H1 (cell line): ENCODE measurements at regions of chr21 and their contacts with region 1.

Region 1: GRCh38 chr21:43676391-43676790 is 17.0 kb downstream of the RRP1B start:
- DNase-seq: no peak
- H3K4me3 ChIP-seq: no peak overlapping the region
- H3K27ac ChIP-seq: no peak overlapping the region
- H3K4me1 ChIP-seq: peaks cover 0 to 4% (median 0%) of the 10 kb centered on the region in 4 experiments; a peak in 2 of 7 replicates
- H3K27me3 ChIP-seq: no peaks in the 10 kb centered on the region
- CTCF ChIP-seq: no peak
- EP300 ChIP-seq: no peak
- POLR2A ChIP-seq: no peak
- RAD21 ChIP-seq: no peak

Region 2: DNA sequence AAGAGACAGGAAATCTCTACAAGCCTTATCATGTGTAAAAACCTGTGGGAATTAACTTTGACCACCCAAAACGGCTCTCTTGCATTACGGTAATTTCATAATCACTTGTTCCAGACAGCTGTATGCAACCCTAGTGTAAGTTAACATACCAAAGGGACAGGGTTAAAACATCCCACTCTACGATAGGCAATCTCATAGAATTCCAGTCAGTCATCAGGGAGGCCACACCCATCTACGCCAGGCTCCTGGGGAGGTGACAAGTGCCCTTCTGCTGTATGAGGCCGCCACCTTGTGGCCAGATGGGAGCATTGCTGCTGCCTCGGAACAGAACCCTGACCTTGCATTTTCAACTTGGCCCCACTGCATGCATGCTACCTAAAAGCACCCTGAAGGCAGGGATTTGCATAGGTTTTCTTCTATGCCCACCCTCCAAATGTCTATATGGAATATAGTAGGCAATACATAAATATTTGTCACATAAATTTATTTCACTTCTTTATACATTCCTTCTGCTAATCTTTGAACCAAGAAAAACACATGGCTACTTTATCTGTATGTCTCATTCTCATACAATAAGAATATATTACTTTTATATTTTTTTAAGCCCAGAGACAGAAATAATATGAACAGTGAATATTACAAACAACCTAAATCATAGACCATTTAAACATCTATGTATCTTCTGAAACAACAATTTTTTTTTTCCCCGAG is 29.7 kb before region 1 on chr21:
- CTCF ChIA-PET with region 1: no interaction called
- POLR2A ChIA-PET with region 1: no interaction called
- DNase-seq: peak; percentile 85 to 93
- H3K4me3 ChIP-seq: no peak overlapping the region
- H3K27ac ChIP-seq: no peak overlapping the region
- H3K4me1 ChIP-seq: no peaks in the 10 kb centered on the region
- H3K27me3 ChIP-seq: no peaks in the 10 kb centered on the region
- CTCF ChIP-seq: peak; percentile 96 to 100 (median 99)
- EP300 ChIP-seq: no peak
- POLR2A ChIP-seq: no peak
- RAD21 ChIP-seq: peak; percentile 100

Region 3: GRCh38 chr21:43664358-43664757 is 12.0 kb before region 1 on chr21:
- CTCF ChIA-PET with region 1: no interaction called
- POLR2A ChIA-PET with region 1: interaction called, 12 read pairs
- DNase-seq: no peak
- H3K4me3 ChIP-seq: no peak overlapping the region
- H3K27ac ChIP-seq: no peak overlapping the region
- H3K4me1 ChIP-seq: peaks cover 0 to 8% (median 2%) of the 10 kb centered on the region in 4 experiments; a peak in 5 of 7 replicates
- H3K27me3 ChIP-seq: no peaks in the 10 kb centered on the region
- CTCF ChIP-seq: no peak
- EP300 ChIP-seq: no peak
- POLR2A ChIP-seq: no peak
- RAD21 ChIP-seq: no peak

Region 4: GRCh38 chr21:43688287-43688574 is 11.8 kb after region 1 on chr21:
- CTCF ChIA-PET with region 1: interaction called, 4 read pairs
- POLR2A ChIA-PET with region 1: interaction called, 10 read pairs
- DNase-seq: no peak
- H3K4me3 ChIP-seq: no peak overlapping the region
- H3K27ac ChIP-seq: no peak overlapping the region
- H3K4me1 ChIP-seq: no peaks in the 10 kb centered on the region
- H3K27me3 ChIP-seq: no peaks in the 10 kb centered on the region
- CTCF ChIP-seq: no peak
- EP300 ChIP-seq: no peak
- POLR2A ChIP-seq: no peak
- RAD21 ChIP-seq: no peak

Region 5: GRCh38 chr21:43716376-43717165 is 40.2 kb after region 1 on chr21:
- CTCF ChIA-PET with region 1: no interaction called
- POLR2A ChIA-PET with region 1: no interaction called
- DNase-seq: no peak
- H3K4me3 ChIP-seq: no peak overlapping the region
- H3K27ac ChIP-seq: no peak overlapping the region
- H3K4me1 ChIP-seq: peaks cover 0 to 26% (median 17%) of the 10 kb centered on the region in 4 experiments; a peak in 6 of 7 replicates
- H3K27me3 ChIP-seq: peaks cover 0 to 10% (median 7%) of the 10 kb centered on the region in 4 experiments; a peak in 4 of 7 replicates
- CTCF ChIP-seq: no peak
- EP300 ChIP-seq: no peak
- POLR2A ChIP-seq: no peak
- RAD21 ChIP-seq: no peak